ENCODE measurements at regions of chr2 and their contacts with region 1.

Region 1: DNA sequence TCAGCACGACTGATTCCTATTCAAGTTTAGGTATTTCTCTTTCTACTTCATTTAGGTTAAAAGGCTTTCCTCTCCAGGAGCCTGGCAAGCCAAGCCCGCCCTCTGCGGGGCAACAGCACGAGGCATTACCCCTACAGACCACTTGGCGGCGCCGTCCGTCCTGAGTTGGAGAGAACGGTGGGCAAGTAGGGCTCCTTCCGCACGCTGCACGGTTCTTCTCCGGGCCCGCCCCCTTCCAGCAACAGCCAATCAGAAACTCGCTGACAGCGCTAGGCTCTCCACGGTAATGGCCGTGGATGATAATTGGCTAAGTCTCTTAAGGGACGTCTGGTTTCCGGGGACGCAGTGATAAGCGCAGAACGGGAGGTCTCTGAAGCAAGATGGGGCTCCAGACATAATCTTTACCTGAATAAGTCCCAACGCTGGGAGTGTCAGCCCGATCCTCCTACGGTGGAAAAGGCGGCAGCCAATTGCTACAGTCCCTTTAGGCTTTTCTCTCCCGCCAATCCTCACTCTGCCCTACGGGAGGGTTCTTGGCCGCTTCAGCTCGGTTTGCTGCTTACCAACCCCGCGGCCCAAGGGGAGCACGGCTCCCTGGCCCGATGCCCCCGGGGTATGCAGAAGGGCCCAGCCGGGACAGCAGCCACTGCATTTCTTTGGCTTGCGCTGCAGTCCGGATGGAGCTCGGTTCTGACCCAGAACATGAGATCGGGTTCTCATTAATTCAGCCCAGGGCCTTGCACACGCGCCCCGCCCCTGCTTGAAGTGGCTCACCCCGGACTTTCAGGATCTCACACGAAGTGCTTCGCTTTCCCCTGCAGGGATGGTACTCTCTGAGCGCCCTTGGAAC is 206.9 kb upstream of the PKDCC start:
- DNase-seq: peak; percentile 92 to 98
- ATAC-seq: peak; percentile 98 to 100 (median 98)
- H3K4me3 ChIP-seq: peak overlapping the region; percentile 83
- H3K4me3 Mint-ChIP-seq: peak overlapping the region; percentile 98
- H3K27ac ChIP-seq: peak overlapping the region; percentile 77
- H3K27ac Mint-ChIP-seq: peak overlapping the region; percentile 83 to 93
- H3K4me1 ChIP-seq: peaks cover 11% of the 10 kb centered on the region
- H3K4me1 Mint-ChIP-seq: peaks cover 15 to 16% of the 10 kb centered on the region in 2 donors
- H3K27me3 ChIP-seq: peaks cover 10% of the 10 kb centered on the region
- H3K27me3 Mint-ChIP-seq: peaks cover 28 to 38% of the 10 kb centered on the region in 2 donors
- CTCF ChIP-seq: peak; percentile 94

Region 2: GRCh38 chr2:42328148-42328833 is 487.4 kb after region 1 on chr2:
- intact Hi-C with region 1: loop called (anchors 1 kb)
- DNase-seq: peak in 1 of 2 donors; percentile 52
- ATAC-seq: peak in 2 of 3 donors; percentile 52 to 53
- H3K4me3 ChIP-seq: no peak overlapping the region
- H3K4me3 Mint-ChIP-seq: no peak overlapping the region
- H3K27ac ChIP-seq: no peak overlapping the region
- H3K27ac Mint-ChIP-seq: no peak overlapping the region
- H3K4me1 ChIP-seq: no peaks in the 10 kb centered on the region
- H3K4me1 Mint-ChIP-seq: peaks cover 0 to 4% of the 10 kb centered on the region in 2 donors
- H3K27me3 ChIP-seq: no peaks in the 10 kb centered on the region
- H3K27me3 Mint-ChIP-seq: no peaks in the 10 kb centered on the region
- CTCF ChIP-seq: peak; percentile 49